Endothelial cell of umbilical vein (primary cell): ENCODE measurements at regions of chr14 and their contacts with region 1.

Region 1: DNA sequence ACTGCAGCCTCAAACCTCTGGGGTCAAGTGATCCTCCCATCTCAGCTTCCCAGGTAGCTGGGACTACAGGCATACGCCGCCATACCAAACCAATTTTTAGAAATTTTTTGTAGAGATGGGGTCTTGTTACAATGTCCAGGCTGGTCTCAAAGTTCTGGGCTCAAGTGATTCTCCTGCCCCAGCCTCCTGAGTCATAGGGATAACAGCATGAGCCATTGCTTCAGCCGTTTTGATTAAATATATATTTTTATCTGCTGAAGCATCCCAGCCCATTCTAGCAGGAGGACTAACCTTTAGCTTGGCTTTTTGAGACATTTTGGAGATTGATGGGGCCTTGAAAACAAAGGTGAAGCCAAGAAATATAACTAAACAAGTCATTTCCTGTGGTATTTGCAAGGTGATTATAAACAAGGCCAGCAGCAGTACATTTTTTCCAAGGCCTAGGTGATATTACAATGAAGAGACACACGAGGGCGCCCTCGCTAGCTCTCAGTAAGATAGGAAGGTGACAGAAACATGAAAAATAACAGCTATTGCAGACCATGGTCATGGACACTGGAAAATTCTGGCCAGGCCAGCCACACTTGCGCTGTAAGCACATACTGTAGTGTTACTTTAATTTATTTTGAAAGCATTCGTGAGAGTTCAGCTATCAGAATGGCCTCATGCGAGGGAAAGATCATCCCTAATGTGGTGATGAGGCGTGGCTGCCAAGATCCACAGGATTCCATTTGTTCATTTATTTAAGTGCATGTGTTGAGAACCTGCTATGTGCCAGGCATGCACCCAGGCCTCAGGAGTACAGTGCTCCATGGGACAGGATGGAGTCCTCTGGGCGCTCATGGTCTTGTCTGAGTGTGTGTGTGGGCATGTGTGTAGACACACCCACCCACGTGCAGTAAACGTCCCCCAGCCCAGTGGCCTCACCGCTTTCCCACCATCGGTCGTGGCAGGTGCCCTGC is 63.5 kb downstream of the DGLUCY start:
- DNase-seq: peak; percentile 88
- H3K4me3 ChIP-seq: no peak overlapping the region
- H3K27ac ChIP-seq: no peak overlapping the region
- H3K4me1 ChIP-seq: peaks cover 4% of the 10 kb centered on the region
- H3K27me3 ChIP-seq: no peaks in the 10 kb centered on the region
- CTCF ChIP-seq: peak; percentile 69 to 74
- POLR2A ChIP-seq: no peak

Region 2: DNA sequence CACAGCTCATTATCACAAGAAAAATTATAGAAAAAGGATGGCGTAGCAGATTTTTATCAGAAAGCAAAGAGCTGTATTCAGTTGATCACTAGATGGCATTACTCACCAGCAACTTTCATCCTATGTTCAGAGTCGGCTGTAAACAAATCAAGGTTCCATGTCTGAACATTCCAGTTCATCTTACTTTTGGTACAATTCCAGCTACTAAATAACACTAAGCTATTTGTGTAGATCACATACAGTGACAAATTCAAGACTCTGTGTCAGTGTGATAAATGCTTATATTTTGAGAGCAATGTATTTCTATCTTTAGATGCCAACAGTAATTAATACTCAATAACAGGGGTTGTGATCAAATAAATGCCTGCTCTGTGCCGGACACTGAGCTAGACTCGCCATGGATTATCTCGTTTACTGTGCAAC is 875.7 kb before region 1 on chr14:
- CTCF ChIA-PET with region 1: interaction called, 10 read pairs
- POLR2A ChIA-PET with region 1: no interaction called
- dilution Hi-C with region 1: no loop called
- intact Hi-C with region 1: no loop called
- DNase-seq: peak; percentile 76
- H3K4me3 ChIP-seq: no peak overlapping the region
- H3K27ac ChIP-seq: no peak overlapping the region
- H3K4me1 ChIP-seq: no peaks in the 10 kb centered on the region
- H3K27me3 ChIP-seq: no peaks in the 10 kb centered on the region
- CTCF ChIP-seq: peak; percentile 22 to 41
- POLR2A ChIP-seq: no peak

Region 3: DNA sequence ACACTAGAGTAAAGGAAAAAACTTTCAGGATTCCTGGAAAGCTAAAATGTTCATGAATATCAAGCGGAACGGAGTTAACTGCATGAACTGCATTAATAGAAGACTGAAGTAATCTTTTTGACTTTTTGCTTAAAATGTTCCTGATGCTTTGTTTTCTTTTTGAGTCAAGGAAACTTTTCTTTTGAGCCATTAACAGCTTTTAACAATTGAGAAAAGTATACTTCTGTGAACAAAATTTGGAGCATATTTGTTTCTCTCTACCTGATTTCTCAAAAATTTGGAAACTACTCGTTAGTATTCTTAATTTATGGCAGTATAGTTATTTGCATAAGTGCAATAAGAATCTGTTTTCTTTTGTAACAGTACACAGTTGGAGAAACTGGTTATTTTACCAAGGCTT is 702.1 kb before region 1 on chr14:
- CTCF ChIA-PET with region 1: no interaction called
- POLR2A ChIA-PET with region 1: no interaction called
- dilution Hi-C with region 1: no loop called
- intact Hi-C with region 1: no loop called
- DNase-seq: no peak
- H3K4me3 ChIP-seq: no peak overlapping the region
- H3K27ac ChIP-seq: no peak overlapping the region
- H3K4me1 ChIP-seq: no peaks in the 10 kb centered on the region
- H3K27me3 ChIP-seq: peaks cover 0 to 24% of the 10 kb centered on the region in 2 experiments
- CTCF ChIP-seq: no peak
- POLR2A ChIP-seq: no peak

Region 4: DNA sequence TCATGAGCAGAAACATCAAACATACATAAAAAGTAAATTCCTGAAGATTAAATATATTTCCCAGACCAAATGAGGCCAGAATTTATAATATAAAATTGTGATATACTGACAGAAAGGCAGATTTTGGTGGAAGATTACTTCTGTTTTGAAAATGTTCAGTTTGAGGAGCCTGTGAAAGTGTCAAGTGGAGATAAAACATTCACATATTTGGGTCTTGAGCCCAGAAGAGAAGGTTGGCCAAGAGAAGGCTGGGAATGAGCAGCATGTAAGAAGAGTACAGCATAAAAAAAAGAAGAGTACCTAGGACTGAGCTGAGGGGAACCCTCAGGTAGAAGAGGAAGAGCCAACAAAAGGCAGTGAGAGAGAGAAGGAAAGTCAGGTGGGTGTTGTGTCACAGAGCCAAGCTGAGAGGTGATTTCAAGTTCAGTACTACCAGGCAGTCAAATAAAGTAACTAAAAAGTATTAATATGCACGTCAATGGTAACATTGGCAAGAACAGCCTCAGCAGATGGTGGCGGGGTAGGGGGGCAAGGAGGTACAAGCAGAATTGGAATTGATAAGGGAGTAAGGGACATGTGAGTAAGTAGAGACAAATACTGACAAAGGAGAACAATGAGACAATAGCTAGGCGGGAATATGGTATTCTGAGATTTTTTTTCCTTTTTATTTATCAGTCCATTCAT is 240.5 kb before region 1 on chr14:
- CTCF ChIA-PET with region 1: no interaction called
- POLR2A ChIA-PET with region 1: no interaction called
- dilution Hi-C with region 1: no loop called
- intact Hi-C with region 1: no loop called
- DNase-seq: no peak
- H3K4me3 ChIP-seq: no peak overlapping the region
- H3K27ac ChIP-seq: no peak overlapping the region
- H3K4me1 ChIP-seq: no peaks in the 10 kb centered on the region
- H3K27me3 ChIP-seq: no peaks in the 10 kb centered on the region
- CTCF ChIP-seq: no peak
- POLR2A ChIP-seq: no peak

Region 5: GRCh38 chr14:91060351-91061055 is 116.9 kb before region 1 on chr14 and contains the start of gene RPS6KA5:
- CTCF ChIA-PET with region 1: interaction called, 46 read pairs
- POLR2A ChIA-PET with region 1: no interaction called
- dilution Hi-C with region 1: no loop called
- intact Hi-C with region 1: loop called (anchors 1 kb)
- DNase-seq: peak; percentile 100
- H3K4me3 ChIP-seq: peak within 1 kb of the TSS; percentile 68 to 100 (median 71)
- H3K27ac ChIP-seq: peak within 1 kb of the TSS; percentile 75
- H3K4me1 ChIP-seq: peaks cover 22% of the 10 kb centered on the region
- H3K27me3 ChIP-seq: no peaks in the 10 kb centered on the region
- CTCF ChIP-seq: no peak
- POLR2A ChIP-seq: peak; percentile 41
- total RNA-seq, gene RPS6KA5: 5.4 and 8.8 TPM in 2 replicates

Region 6: DNA sequence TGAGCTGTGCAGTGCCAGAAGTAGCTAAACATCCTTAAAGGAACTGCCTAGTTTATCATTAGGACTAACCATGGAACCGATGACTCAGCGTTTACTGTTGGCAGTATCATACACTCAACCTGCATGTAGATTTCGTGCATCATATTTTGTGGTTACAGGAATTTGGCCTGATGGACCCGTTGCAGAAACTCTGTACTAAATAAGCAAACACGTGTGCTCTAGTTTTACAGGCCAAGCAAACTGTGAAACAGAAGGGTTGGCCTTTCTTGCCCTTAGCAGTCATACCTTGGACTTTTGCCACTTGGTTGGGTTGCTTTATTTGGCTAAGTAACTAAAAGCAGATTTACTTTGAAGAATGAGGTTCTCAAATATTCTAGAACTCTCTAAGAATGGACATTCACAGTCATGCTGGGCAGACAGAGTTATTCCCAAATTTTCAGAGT is 27.9 kb before region 1 on chr14:
- CTCF ChIA-PET with region 1: interaction called, 34 read pairs
- POLR2A ChIA-PET with region 1: no interaction called
- dilution Hi-C with region 1: no loop called
- intact Hi-C with region 1: no loop called
- DNase-seq: peak; percentile 91
- H3K4me3 ChIP-seq: no peak overlapping the region
- H3K27ac ChIP-seq: peak overlapping the region; percentile 13
- H3K4me1 ChIP-seq: peaks cover 19% of the 10 kb centered on the region
- H3K27me3 ChIP-seq: no peaks in the 10 kb centered on the region
- CTCF ChIP-seq: no peak
- POLR2A ChIP-seq: no peak

Region 7: GRCh38 chr14:91228112-91229004 is 51.0 kb after region 1 on chr14:
- CTCF ChIA-PET with region 1: interaction called, 11 read pairs
- POLR2A ChIA-PET with region 1: no interaction called
- dilution Hi-C with region 1: no loop called
- intact Hi-C with region 1: no loop called
- DNase-seq: peak; percentile 75
- H3K4me3 ChIP-seq: no peak overlapping the region
- H3K27ac ChIP-seq: no peak overlapping the region
- H3K4me1 ChIP-seq: peaks cover 10% of the 10 kb centered on the region
- H3K27me3 ChIP-seq: no peaks in the 10 kb centered on the region
- CTCF ChIP-seq: no peak
- POLR2A ChIP-seq: no peak

Region 8: DNA sequence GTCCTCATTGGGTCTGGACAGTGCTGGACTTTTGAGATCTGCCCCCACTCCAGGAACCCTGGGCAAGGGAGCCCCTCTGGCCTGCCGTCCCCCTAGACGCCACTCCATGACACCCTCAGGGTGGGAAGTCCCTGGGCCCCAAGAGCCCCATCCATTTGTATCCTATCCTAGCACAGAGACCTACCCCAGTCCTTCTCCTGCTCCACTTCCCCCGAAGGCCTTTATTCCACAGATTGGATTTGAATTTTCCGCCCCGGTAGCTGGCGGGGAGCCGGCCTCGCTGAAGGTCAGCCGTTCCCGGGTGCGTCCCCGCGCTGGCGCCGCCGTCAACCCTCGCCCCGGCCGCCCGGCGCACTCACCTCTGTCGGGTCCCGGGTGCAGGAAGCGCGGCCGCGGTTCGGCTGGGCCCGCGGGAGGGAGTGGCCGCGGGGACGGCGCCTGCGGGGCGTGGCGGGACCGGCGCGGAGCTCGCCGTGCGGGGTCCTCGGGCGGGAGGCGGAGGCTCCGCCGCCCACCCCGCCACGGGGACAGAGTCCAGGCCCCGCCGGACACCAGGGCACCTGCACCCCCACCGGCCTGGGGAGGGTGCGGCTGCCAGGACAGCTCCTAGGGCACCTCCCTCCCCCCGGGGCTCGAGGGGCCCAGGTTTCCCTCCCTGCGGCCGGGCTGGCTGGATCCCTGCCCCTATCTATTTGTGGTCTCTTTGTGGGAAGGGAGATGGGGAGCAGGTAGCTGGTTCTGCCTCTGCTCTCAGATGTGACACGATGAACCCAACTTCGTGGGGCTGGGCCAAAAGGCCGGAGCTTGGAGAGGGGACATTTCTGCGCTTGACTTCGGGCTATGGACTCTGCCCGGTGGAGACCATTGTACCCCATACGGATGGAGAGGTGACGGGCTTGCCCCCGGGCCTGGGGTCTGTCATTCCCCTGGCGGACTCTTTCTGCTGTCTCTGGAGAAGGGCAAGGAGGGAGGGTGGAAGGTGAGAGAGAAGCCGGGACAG is 87.1 kb after region 1 on chr14:
- CTCF ChIA-PET with region 1: interaction called, 22 read pairs
- POLR2A ChIA-PET with region 1: no interaction called
- dilution Hi-C with region 1: no loop called
- intact Hi-C with region 1: loop called (anchors 5 kb)
- DNase-seq: no peak
- H3K4me3 ChIP-seq: peak overlapping the region; percentile 34 to 45 (median 40)
- H3K27ac ChIP-seq: no peak overlapping the region
- H3K4me1 ChIP-seq: peaks cover 3% of the 10 kb centered on the region
- H3K27me3 ChIP-seq: no peaks in the 10 kb centered on the region
- CTCF ChIP-seq: no peak
- POLR2A ChIP-seq: no peak

Region 9: DNA sequence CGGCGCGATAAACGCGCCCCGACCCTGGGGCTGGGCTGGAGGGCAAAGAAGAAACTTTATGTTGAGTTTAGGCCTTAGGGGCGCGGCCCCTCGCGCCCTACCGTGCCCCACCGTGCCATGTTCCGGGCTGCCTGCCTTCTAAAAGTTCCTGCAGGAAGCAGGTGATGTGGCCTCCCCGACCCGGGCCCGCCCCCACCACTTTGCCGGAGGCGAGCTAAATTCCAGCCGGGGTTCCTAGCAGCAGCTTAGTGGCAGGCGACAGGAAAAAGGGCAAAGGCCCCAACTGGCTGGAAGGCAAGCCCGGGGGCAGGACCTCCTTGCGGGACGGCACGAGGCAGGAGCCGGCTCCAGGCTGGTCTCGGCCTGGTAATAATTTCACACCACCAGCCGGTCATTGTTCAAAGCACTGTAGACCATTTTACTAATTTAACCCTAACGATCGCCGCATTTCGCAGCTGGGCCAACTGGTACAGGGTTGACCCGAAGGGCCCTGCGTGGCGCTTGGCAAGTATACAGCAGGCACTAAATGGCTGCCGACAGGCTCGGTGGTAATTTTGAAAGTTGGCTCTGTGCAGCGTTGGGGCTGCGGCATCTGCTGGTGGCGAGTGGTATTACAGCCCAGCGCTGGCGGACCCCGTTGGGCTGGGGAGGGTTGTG is 241.2 kb after region 1 on chr14:
- CTCF ChIA-PET with region 1: interaction called, 10 read pairs
- POLR2A ChIA-PET with region 1: no interaction called
- dilution Hi-C with region 1: no loop called
- intact Hi-C with region 1: loop called (anchors 1 kb)
- DNase-seq: peak; percentile 67
- H3K4me3 ChIP-seq: peak overlapping the region in 1 of 3 experiments; percentile 73
- H3K27ac ChIP-seq: no peak overlapping the region
- H3K4me1 ChIP-seq: peaks cover 25% of the 10 kb centered on the region
- H3K27me3 ChIP-seq: no peaks in the 10 kb centered on the region
- CTCF ChIP-seq: peak; percentile 94 to 96
- POLR2A ChIP-seq: no peak

Region 10: DNA sequence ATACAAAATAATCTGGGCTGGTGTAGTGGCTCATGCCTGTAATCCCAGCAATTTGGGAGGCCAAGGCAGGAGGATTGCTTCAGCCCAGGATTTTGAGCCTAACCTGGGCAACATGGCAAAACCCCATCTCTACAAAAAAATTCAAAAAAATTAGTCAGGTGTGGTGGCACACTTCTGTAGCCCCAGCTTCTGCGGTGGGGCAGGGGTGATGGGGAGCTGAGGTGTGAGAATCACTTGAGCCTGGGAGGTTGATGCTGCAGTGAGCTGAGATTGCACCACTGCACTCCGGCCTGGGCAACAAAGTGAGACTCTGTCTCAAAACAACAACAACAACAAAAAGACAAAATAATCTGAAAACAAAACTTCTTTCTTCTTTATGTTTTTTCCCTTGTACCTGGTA is 624.0 kb after region 1 on chr14:
- CTCF ChIA-PET with region 1: no interaction called
- POLR2A ChIA-PET with region 1: no interaction called
- dilution Hi-C with region 1: no loop called
- intact Hi-C with region 1: no loop called
- DNase-seq: no peak
- H3K4me3 ChIP-seq: no peak overlapping the region
- H3K27ac ChIP-seq: no peak overlapping the region
- H3K4me1 ChIP-seq: no peaks in the 10 kb centered on the region
- H3K27me3 ChIP-seq: no peaks in the 10 kb centered on the region
- CTCF ChIP-seq: no peak
- POLR2A ChIP-seq: no peak